Prostate gland (tissue), 2 donors: ENCODE measurements at regions of chr6 and their contacts with region 1.

Region 1: GRCh38 chr6:32570363-32570905 is 19.2 kb downstream of the HLA-DRB1 start:
- DNase-seq: no peak
- H3K4me3 ChIP-seq: no peak overlapping the region
- H3K27ac ChIP-seq: no peak overlapping the region
- H3K4me1 ChIP-seq: no peaks in the 10 kb centered on the region
- H3K27me3 ChIP-seq: no peaks in the 10 kb centered on the region
- CTCF ChIP-seq: no peak
- POLR2A ChIP-seq: no peak

Region 2: DNA sequence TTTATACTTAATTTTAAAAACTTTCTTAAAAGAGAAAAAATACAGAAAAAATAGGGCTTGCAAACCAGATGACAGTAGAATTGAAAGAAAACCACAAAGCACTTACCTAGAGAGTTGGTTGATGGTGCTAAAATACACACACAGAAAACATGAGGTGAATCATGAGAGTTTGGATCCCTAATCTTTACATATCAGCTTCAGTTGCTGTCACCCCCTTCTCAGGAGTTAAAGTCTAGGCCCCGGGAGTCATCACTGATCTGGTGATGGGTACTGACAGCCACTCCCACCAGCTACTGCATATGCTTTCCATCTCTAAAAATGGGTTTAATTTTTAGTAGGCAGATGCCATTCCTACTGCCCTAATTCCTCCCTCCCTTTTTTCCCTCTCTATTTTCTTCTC is 215.4 kb before region 1 on chr6:
- intact Hi-C with region 1: no loop called
- DNase-seq: no peak
- H3K4me3 ChIP-seq: no peak overlapping the region
- H3K27ac ChIP-seq: no peak overlapping the region
- H3K4me1 ChIP-seq: no peaks in the 10 kb centered on the region
- H3K27me3 ChIP-seq: no peaks in the 10 kb centered on the region
- CTCF ChIP-seq: no peak
- POLR2A ChIP-seq: no peak

Region 3: GRCh38 chr6:32529697-32530429 is 40.6 kb before region 1 on chr6 and contains the start of gene HLA-DRB5:
- intact Hi-C with region 1: loop called (anchors 5 kb)
- DNase-seq: no peak
- H3K4me3 ChIP-seq: no peak within 1 kb of the TSS
- H3K27ac ChIP-seq: no peak within 1 kb of the TSS
- H3K4me1 ChIP-seq: no peaks in the 10 kb centered on the region
- H3K27me3 ChIP-seq: no peaks in the 10 kb centered on the region
- CTCF ChIP-seq: no peak
- POLR2A ChIP-seq: no peak
- total RNA-seq, gene HLA-DRB5: not detected

Region 4: GRCh38 chr6:32685603-32686002 is 115.2 kb after region 1 on chr6:
- intact Hi-C with region 1: no loop called
- DNase-seq: no peak
- H3K4me3 ChIP-seq: no peak overlapping the region
- H3K27ac ChIP-seq: no peak overlapping the region
- H3K4me1 ChIP-seq: no peaks in the 10 kb centered on the region
- H3K27me3 ChIP-seq: no peaks in the 10 kb centered on the region
- CTCF ChIP-seq: no peak
- POLR2A ChIP-seq: no peak